CD4-positive, alpha-beta T cell (primary cell): ENCODE measurements at regions of chr9 and their contacts with region 1.

Region 1: DNA sequence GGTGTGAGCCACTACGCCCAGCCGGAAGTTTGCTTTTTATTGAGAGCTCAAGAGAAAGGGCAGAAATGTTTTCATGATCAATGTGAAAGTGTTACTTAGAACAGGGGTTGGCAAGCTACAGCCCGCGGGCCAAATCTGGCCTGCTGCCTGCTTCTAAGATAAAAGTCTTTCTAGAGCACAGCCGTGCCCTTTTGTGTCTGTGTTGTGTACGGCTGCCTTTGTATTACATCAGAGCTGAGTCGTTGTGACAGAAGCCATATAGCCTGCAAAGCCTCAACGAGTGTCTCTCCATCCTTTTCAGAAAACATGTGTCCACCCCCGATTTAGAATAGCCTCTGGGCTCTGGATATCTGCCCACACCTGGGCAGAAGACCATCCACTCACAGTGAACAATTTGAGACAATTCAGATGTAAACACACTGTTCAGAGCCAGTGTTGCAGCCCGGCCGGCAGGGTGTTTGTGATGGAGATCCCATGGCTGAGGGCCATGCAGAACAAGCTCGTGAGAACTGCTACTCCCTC is 28.8 kb downstream of the AK8 start:
- DNase-seq: peak in 3 of 14 experiments; percentile 11 to 29 (median 21)
- ATAC-seq: peak; percentile 73
- H3K4me3 ChIP-seq: peak overlapping the region; percentile 32
- H3K4me3 Mint-ChIP-seq: peak overlapping the region; percentile 72
- H3K27ac ChIP-seq: peak overlapping the region in 1 of 2 donors; percentile 24
- H3K27ac Mint-ChIP-seq: peak overlapping the region; percentile 78
- H3K4me1 ChIP-seq: peaks cover 16% of the 10 kb centered on the region
- H3K4me1 Mint-ChIP-seq: peaks cover 21% of the 10 kb centered on the region
- H3K27me3 ChIP-seq: no peaks in the 10 kb centered on the region
- H3K27me3 Mint-ChIP-seq: no peaks in the 10 kb centered on the region
- CTCF ChIP-seq: no peak

Region 2: DNA sequence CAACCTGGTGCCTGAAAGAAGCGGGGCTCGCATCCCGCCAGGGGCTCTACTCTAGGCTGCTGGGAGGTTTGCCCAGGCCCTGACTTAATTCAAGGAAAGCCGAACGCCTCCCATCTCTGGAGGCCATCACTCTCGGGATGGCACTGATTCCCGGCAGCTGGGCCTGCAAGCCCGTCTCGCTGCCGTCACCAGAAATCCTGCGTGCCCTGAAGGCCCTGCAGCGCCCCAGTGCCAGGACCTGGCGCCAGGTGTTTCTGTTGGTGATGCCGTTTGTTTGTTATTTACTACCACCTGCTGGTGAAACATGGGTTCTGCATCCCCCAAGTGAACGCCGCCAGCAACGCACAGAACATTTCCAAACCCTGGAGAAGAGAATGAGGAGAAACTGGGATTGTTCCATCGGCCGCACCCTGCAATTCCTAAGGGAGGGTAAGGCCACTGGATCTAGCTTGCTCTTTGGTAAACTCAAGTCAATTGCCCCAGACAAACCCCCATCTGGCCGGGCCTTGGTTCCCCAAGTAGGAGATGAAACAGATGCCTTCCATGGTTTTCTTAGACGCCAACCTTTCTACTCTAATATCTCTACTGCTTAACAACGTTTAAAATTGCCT is 49.1 kb before region 1 on chr9:
- CTCF ChIA-PET with region 1: no interaction called
- POLR2A ChIA-PET with region 1: no interaction called
- intact Hi-C with region 1: no loop called
- DNase-seq: peak; percentile 35 to 84 (median 58)
- ATAC-seq: peak; percentile 98
- H3K4me3 ChIP-seq: no peak overlapping the region
- H3K4me3 Mint-ChIP-seq: no peak overlapping the region
- H3K27ac ChIP-seq: no peak overlapping the region
- H3K27ac Mint-ChIP-seq: no peak overlapping the region
- H3K4me1 ChIP-seq: peaks cover 15% of the 10 kb centered on the region
- H3K4me1 Mint-ChIP-seq: no peaks in the 10 kb centered on the region
- H3K27me3 ChIP-seq: peaks cover 9 to 13% of the 10 kb centered on the region in 2 experiments
- H3K27me3 Mint-ChIP-seq: peaks cover 67% of the 10 kb centered on the region
- CTCF ChIP-seq: peak; percentile 92

Region 3: DNA sequence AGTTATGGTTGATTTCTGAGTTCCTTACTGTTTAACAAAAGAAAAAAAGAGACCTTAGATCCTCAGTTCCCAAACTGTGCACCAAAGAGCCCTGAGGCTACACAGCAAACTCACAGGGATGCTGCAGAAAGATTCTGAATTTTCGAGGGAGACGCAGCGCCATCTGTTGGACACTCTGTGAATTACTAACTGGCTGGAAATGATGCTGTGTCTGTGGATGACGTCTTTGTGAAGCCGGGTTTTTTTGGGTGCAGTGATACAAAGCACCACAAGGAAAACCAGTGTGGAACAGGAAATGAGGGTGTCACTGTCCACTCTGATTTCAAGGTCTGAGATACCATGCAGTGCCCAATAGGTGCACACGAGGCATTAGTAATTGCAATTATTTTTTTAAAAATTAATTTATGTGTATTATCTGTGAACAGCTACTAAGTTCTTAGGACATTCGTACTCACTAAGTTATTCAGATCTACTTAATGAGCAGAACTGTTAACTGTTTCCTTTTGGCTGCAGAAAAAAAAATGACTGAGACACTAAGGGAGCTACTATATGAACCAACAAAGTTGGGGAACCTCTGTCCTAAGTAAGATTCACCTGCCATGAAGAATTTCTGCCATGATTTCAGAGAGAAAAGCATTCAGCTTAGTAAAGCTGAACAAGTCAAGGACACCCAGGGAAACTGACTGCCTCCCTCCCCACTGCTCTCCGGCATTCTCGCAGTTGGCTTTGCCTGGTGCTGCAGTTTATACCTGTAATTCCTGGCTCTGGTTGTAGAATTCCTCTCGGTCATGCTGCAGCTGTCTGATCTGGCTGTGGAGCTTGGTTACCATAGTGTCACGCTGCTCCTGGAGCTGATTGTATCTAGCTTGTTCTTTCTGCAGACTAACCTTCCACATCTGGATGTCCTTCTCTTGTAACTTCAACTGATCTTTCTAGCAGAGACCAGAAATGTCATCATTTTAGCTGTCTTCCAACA is 52.9 kb after region 1 on chr9:
- CTCF ChIA-PET with region 1: interaction called, 5 read pairs
- POLR2A ChIA-PET with region 1: no interaction called
- intact Hi-C with region 1: loop called (anchors 2 to 10 kb)
- DNase-seq: peak; percentile 58 to 91 (median 76)
- ATAC-seq: peak; percentile 99
- H3K4me3 ChIP-seq: no peak overlapping the region
- H3K4me3 Mint-ChIP-seq: no peak overlapping the region
- H3K27ac ChIP-seq: no peak overlapping the region
- H3K27ac Mint-ChIP-seq: peak overlapping the region; percentile 70
- H3K4me1 ChIP-seq: no peaks in the 10 kb centered on the region
- H3K4me1 Mint-ChIP-seq: peaks cover 5% of the 10 kb centered on the region
- H3K27me3 ChIP-seq: no peaks in the 10 kb centered on the region
- H3K27me3 Mint-ChIP-seq: no peaks in the 10 kb centered on the region
- CTCF ChIP-seq: peak; percentile 97